ENCODE measurements at regions of chr6 and their contacts with region 1.

Region 1: DNA sequence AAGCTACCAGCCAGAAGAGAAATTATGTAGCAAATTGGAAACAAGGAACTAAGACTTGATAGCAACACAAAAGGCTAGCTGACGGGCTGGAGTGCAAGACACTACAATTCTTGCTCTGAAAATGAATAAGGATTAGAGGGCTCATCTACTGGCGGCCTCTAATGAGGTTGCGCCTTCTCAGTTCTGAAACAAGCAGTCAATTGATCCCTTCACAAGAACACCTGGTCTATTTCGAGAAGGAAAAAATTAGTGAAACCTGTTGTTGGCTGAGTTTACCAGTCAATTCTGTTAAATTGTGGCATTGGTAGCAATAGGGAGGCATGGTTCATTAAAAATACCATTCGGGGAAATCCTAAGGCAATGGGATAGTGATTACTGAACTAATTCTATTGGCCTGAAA is 74.8 kb upstream of the JARID2 start:
- DNase-seq: no peak
- H3K4me3 ChIP-seq: no peak overlapping the region
- H3K27ac ChIP-seq: no peak overlapping the region
- H3K4me1 ChIP-seq: no peaks in the 10 kb centered on the region
- H3K27me3 ChIP-seq: no peaks in the 10 kb centered on the region
- CTCF ChIP-seq: no peak

Region 2: DNA sequence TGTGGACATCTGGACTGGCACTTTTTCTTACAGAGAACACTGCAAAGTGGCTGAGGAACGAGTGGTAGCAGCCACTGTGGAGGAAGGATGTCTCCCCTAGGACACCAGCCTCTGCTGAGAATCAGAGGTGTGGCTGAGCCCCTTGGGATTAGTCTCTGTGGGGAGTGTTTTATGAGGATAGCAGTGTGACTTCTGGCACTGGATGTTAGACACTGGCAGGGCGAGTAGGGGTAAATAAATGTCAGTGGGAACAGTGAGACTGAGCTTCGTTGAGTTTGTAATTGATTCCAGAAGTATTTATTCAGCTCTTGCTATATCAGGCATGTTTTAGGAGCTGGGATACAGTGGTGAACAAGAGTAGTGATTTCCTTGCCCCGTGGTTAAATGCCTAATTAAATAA is 198.8 kb after region 1 on chr6:
- CTCF ChIA-PET with region 1: no interaction called
- POLR2A ChIA-PET with region 1: no interaction called
- intact Hi-C with region 1: no loop called
- DNase-seq: peak; percentile 81
- H3K4me3 ChIP-seq: no peak overlapping the region
- H3K27ac ChIP-seq: no peak overlapping the region
- H3K4me1 ChIP-seq: peaks cover 60% of the 10 kb centered on the region
- H3K27me3 ChIP-seq: no peaks in the 10 kb centered on the region
- CTCF ChIP-seq: no peak

Region 3: GRCh38 chr6:15420959-15421438 is 250.0 kb after region 1 on chr6:
- CTCF ChIA-PET with region 1: interaction called, 10 read pairs
- POLR2A ChIA-PET with region 1: no interaction called
- intact Hi-C with region 1: no loop called
- DNase-seq: no peak
- H3K4me3 ChIP-seq: no peak overlapping the region
- H3K27ac ChIP-seq: no peak overlapping the region
- H3K4me1 ChIP-seq: peaks cover 7% of the 10 kb centered on the region
- H3K27me3 ChIP-seq: no peaks in the 10 kb centered on the region
- CTCF ChIP-seq: no peak

Measured in A673 (cell line).